ENCODE measurements at regions of chr6 and their contacts with region 1.

Region 1: GRCh38 chr6:43951063-43951755 is 176.0 kb downstream of the MRPL14 start:
- DNase-seq: peak; percentile 45 to 68
- ATAC-seq: peak; percentile 52 to 76 (median 62)
- H3K4me3 ChIP-seq: no peak overlapping the region
- H3K27ac ChIP-seq: peak overlapping the region in 6 of 10 donors; percentile 11 to 92 (median 56)
- H3K4me1 ChIP-seq: peaks cover 0 to 48% (median 9%) of the 10 kb centered on the region in 9 donors
- H3K27me3 ChIP-seq: peaks cover 0 to 8% (median 0%) of the 10 kb centered on the region in 7 donors
- CTCF ChIP-seq: peak; percentile 22 to 65 (median 60)

Region 2: GRCh38 chr6:43667245-43668150 is 283.7 kb before region 1 on chr6:
- intact Hi-C with region 1: loop called in 1 of 10 experiments (anchors 10 kb)
- DNase-seq: peak; percentile 83 to 85
- ATAC-seq: peak; percentile 49 to 75 (median 59)
- H3K4me3 ChIP-seq: peak overlapping the region in 3 of 10 donors; percentile 15 to 24 (median 22)
- H3K27ac ChIP-seq: peak overlapping the region in 8 of 10 donors; percentile 19 to 85 (median 80)
- H3K4me1 ChIP-seq: peaks cover 26 to 47% (median 41%) of the 10 kb centered on the region in 9 donors
- H3K27me3 ChIP-seq: no peaks in the 10 kb centered on the region
- CTCF ChIP-seq: peak; percentile 85 to 98 (median 95)

Region 3: GRCh38 chr6:43774776-43775534 is 176.3 kb before region 1 on chr6:
- intact Hi-C with region 1: loop called in 4 of 10 experiments (anchors 2 to 5 kb)
- DNase-seq: peak; percentile 74 to 81
- ATAC-seq: peak; percentile 1 to 42 (median 14)
- H3K4me3 ChIP-seq: peak overlapping the region in 9 of 10 donors; percentile 85 to 98 (median 95)
- H3K27ac ChIP-seq: peak overlapping the region; percentile 86 to 99 (median 95)
- H3K4me1 ChIP-seq: peaks cover 30 to 81% (median 55%) of the 10 kb centered on the region in 9 donors
- H3K27me3 ChIP-seq: no peaks in the 10 kb centered on the region
- CTCF ChIP-seq: peak; percentile 77 to 88 (median 83)

Region 4: DNA sequence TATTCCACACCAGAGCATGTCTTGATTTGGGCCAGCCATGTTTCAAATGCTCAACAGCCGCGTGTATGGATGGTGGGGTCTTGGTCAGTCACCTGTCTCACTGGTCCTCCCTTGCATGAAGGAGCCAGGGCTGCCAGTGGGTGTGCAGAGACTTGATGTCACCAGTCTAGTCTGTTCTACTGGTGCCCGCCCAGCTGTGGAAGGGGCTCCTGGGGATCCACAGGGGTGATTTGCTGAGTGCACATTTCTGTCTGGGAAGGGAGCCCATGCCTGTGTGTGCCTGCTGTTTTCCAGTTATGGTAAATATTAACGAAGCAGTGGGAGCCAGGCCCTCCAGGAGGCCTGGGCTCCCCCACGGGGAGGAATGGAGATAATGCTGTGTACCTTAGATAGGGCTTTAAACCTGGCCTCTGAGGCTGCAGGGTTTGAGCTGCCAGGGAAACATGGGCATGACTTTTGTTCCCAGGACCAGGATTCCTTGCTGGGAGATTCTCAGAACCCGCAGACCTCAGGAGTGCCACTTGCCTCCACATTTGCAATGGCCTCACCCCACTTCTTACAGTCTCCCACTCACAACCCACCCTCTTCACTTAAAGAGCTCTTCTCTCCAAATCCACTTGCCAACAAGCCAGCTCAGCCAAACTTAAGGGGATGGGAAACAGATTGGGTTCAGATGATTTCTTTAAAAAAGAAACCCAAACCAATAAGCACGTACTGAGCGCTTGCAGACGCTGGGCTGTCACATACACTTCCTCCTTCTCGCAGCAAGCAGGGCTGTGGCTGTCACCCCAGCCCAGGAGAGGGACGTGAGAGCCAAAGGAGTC is 127.1 kb before region 1 on chr6:
- intact Hi-C with region 1: no loop called
- DNase-seq: no peak
- ATAC-seq: peak in 1 of 8 donors; percentile 40
- H3K4me3 ChIP-seq: no peak overlapping the region
- H3K27ac ChIP-seq: no peak overlapping the region
- H3K4me1 ChIP-seq: peaks cover 0 to 7% (median 0%) of the 10 kb centered on the region in 9 donors
- H3K27me3 ChIP-seq: no peaks in the 10 kb centered on the region
- CTCF ChIP-seq: no peak

Region 5: GRCh38 chr6:43838276-43839036 is 112.8 kb before region 1 on chr6:
- intact Hi-C with region 1: loop called in 1 of 10 experiments (anchors 5 kb)
- DNase-seq: peak; percentile 18 to 40
- ATAC-seq: peak; percentile 34 to 86 (median 72)
- H3K4me3 ChIP-seq: no peak overlapping the region
- H3K27ac ChIP-seq: peak overlapping the region in 6 of 10 donors; percentile 12 to 67 (median 46)
- H3K4me1 ChIP-seq: peaks cover 0 to 16% (median 10%) of the 10 kb centered on the region in 9 donors
- H3K27me3 ChIP-seq: no peaks in the 10 kb centered on the region
- CTCF ChIP-seq: peak in 8 of 9 donors; percentile 40 to 64 (median 56)

Region 6: DNA sequence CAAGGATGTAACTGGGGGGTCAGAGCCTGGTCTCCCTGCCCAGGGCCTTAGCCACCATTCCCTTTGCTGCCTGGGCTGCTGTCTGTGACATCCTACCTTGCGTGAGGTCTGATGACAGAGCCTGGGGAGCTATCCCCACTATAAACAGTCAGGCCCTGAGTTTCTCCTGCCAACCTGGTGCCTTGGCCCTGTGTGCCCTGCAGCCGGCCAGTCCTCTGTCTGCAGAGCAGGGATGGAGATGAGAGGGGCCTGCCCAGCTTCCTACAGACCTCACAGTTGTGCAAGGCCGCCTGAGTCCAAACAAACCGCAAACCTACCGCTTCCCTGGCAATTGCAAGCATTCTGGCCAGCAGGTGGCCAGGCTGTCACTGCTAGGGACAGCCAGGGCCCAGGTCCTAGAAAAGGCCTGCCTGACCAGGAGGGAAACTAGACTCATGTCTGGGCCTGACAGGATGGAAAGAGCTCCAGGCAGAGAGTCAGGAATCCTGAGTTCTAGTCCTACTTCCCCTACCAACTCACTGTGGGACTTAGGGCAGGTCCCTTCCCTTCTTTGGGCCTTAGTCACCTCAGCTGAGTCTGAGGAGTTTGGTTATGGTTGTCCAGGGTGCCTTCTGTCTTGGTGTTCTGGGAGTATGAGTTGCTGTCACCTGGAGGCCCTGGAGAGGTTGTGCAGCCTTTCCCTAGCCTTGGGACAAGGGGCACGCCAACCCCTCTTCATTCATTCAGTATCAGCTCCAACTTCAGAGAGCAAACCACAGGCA is 95.0 kb before region 1 on chr6:
- intact Hi-C with region 1: loop called in 3 of 10 experiments (anchors 1 to 5 kb)
- DNase-seq: peak in 1 of 2 donors; percentile 30
- ATAC-seq: peak in 7 of 8 donors; percentile 41 to 69 (median 54)
- H3K4me3 ChIP-seq: no peak overlapping the region
- H3K27ac ChIP-seq: peak overlapping the region in 1 of 10 donors; percentile 22
- H3K4me1 ChIP-seq: no peaks in the 10 kb centered on the region
- H3K27me3 ChIP-seq: no peaks in the 10 kb centered on the region
- CTCF ChIP-seq: peak in 8 of 9 donors; percentile 19 to 58 (median 46)

Region 7: GRCh38 chr6:43990627-43991619 is 39.7 kb after region 1 on chr6:
- intact Hi-C with region 1: loop called in 3 of 10 experiments (anchors 2 to 5 kb)
- DNase-seq: no peak
- ATAC-seq: peak in 7 of 8 donors; percentile 2 to 33 (median 8)
- H3K4me3 ChIP-seq: no peak overlapping the region
- H3K27ac ChIP-seq: peak overlapping the region; percentile 41 to 94 (median 84)
- H3K4me1 ChIP-seq: peaks cover 12 to 70% (median 24%) of the 10 kb centered on the region in 9 donors
- H3K27me3 ChIP-seq: no peaks in the 10 kb centered on the region
- CTCF ChIP-seq: no peak

Region 8: GRCh38 chr6:44002593-44003344 is 51.6 kb after region 1 on chr6:
- intact Hi-C with region 1: loop called in 1 of 10 experiments (anchors 5 kb)
- DNase-seq: peak; percentile 44 to 64
- ATAC-seq: peak; percentile 15 to 59 (median 36)
- H3K4me3 ChIP-seq: peak overlapping the region; percentile 6 to 45 (median 40)
- H3K27ac ChIP-seq: peak overlapping the region in 9 of 10 donors; percentile 53 to 95 (median 90)
- H3K4me1 ChIP-seq: peaks cover 8 to 64% (median 25%) of the 10 kb centered on the region in 9 donors
- H3K27me3 ChIP-seq: peaks cover 0 to 75% (median 27%) of the 10 kb centered on the region in 7 donors
- CTCF ChIP-seq: peak in 4 of 9 donors; percentile 21 to 43 (median 34)